ENCODE measurements at regions of chr20 and their contacts with region 1.

Region 1: DNA sequence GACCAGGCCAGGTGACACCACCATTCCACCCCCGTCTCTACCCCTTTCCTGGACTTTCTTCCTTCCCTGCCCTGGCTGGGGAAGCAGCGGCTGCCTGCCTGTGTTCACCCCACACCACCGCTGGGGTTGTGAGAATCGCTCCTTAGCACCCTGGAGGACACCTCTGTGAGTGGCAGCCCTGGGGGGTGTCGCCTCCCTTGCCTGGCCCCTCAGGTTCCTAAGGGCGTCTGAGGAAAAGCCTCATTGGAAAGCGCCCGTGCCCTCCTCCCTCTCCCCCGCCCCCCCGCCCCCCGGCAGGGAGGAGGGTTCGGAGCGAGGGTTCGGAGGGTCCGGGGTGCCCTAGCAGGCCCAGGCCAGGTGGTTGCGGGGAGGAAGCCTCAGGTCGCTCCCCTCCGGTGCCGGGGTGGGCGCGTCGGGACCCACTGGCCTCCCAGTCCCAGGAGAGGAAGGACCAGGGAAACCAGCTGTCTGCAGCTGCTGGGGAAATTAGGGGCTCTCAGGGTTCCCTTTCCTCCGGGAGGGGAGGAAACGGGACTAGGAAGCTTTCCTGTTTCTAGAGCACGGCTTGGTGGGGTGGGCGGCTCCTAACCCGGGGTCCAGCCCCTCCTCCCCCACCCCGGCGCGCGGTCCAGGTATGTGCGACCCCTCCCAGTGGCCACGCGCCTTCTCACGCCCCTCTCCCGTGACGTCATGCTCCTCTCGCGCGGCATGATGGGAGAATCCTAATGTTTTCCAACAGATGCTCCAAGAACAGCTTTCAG is at the start of gene PHACTR3:
- DNase-seq: no peak
- H3K4me3 ChIP-seq: no peak within 1 kb of the TSS
- H3K27ac ChIP-seq: no peak within 1 kb of the TSS
- H3K4me1 ChIP-seq: no peaks in the 10 kb centered on the region
- H3K27me3 ChIP-seq: peaks cover 30% of the 10 kb centered on the region
- CTCF ChIP-seq: no peak
- total RNA-seq, gene PHACTR3: 11.1 TPM in 1 of 2 donors, not detected in the other

Region 2: GRCh38 chr20:59664421-59664941 is 60.5 kb after region 1 on chr20:
- CTCF ChIA-PET with region 1: no interaction called
- dilution Hi-C with region 1: loop called (anchors 5 kb)
- in situ Hi-C with region 1: no loop called
- intact Hi-C with region 1: no loop called
- DNase-seq: no peak
- H3K4me3 ChIP-seq: no peak overlapping the region
- H3K27ac ChIP-seq: no peak overlapping the region
- H3K4me1 ChIP-seq: no peaks in the 10 kb centered on the region
- H3K27me3 ChIP-seq: no peaks in the 10 kb centered on the region
- CTCF ChIP-seq: no peak

Region 3: DNA sequence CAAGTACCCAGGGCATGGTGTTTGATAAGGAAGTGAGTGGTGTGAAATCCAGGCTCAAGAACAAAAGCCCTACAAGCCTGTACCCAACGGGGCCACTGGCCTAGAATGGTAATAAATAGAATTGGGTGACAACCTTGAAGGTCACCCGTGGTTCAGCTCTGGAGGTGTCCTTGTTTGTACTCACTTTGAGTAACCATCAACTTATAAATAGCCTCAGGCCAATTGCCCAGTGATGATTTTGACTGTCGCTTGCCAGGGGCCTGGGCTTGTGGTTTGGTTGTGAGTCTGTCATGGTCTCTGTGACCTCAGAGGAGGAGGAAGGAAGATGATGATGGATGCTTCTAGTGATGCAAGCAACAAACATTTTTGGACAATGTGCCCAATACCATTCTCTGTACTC is 88.2 kb after region 1 on chr20:
- CTCF ChIA-PET with region 1: no interaction called
- dilution Hi-C with region 1: loop called (anchors 5 kb)
- in situ Hi-C with region 1: no loop called
- intact Hi-C with region 1: no loop called
- DNase-seq: no peak
- H3K4me3 ChIP-seq: no peak overlapping the region
- H3K27ac ChIP-seq: no peak overlapping the region
- H3K4me1 ChIP-seq: no peaks in the 10 kb centered on the region
- H3K27me3 ChIP-seq: no peaks in the 10 kb centered on the region
- CTCF ChIP-seq: no peak

Region 4: GRCh38 chr20:60087563-60088153 is 483.7 kb after region 1 on chr20:
- CTCF ChIA-PET with region 1: no interaction called
- dilution Hi-C with region 1: no loop called
- in situ Hi-C with region 1: no loop called
- intact Hi-C with region 1: no loop called
- DNase-seq: no peak
- H3K4me3 ChIP-seq: no peak overlapping the region
- H3K27ac ChIP-seq: no peak overlapping the region
- H3K4me1 ChIP-seq: no peaks in the 10 kb centered on the region
- H3K27me3 ChIP-seq: no peaks in the 10 kb centered on the region
- CTCF ChIP-seq: no peak